BJ (cell line): ENCODE measurements at regions of chr14 and their contacts with region 1.

Region 1: DNA sequence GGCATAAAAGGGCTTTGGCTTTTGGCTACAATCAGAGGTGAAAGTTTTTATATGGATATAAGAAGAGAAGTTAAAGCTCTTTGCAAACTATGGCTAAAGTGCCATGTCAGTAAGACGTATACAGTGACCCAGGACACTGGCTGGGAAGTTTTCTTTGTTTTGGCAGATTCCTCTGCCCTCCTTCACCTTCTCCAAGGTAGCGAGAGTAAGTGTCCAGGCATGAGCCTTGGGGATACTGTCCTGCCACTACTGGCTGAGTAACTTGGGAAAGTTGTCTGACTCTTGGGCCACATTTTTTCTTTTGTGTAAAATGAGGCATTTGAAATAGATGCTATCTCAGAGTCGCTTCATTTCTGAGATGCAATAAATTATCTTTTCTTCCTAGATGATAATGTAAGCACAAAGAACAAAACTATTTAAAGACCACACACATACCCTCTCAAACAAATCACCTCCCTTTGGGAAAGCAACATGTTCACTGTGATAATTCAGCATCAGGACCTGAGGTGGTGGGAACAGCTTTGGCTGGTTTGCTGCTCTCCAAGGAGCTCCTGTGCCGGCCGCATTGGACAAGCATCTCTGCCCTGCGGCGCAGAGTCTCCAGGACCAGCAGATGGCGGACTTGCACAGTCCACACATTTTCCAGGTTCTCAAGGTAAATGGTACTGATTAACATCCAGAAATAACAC is 106.3 kb downstream of the PTCSC3 start:
- DNase-seq: no peak
- H3K4me3 ChIP-seq: no peak overlapping the region
- H3K27me3 ChIP-seq: no peaks in the 10 kb centered on the region
- CTCF ChIP-seq: peak; percentile 89

Region 2: DNA sequence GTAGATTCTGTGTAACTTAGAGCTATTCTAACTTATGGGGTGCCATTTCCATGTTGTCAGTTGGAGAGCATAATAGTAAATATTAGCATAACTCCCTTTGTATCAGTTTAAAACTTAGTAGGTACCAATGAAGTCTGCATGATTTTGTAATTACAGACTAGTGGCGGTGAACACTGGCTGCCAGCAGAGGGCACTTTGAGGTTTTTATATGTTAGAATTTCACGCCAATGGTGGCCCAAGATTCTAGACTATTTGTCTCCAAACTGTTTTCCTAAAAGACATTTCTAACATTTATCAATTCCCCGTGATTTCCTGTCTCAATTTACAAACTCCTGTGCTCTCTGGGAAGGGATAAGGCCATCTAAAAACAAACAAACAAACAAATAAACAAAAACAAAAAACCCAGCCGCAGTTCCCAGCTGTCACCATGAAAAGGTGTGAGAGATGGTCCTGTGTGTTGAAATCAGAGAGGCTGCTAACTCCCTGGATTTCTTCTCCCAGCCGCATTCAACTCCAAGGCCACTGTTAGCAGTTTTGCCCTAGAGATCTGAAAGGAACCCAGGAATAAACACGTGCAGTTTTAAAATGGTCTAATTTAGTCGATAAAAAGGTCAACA is 186.4 kb before region 1 on chr14:
- CTCF ChIA-PET with region 1: interaction called, 16 read pairs
- POLR2A ChIA-PET with region 1: no interaction called
- DNase-seq: no peak
- H3K4me3 ChIP-seq: no peak overlapping the region
- H3K27me3 ChIP-seq: no peaks in the 10 kb centered on the region
- CTCF ChIP-seq: peak; percentile 71

Region 3: GRCh38 chr14:36059531-36059930 is 10.6 kb before region 1 on chr14:
- CTCF ChIA-PET with region 1: interaction called, 17 read pairs
- POLR2A ChIA-PET with region 1: no interaction called
- DNase-seq: no peak
- H3K4me3 ChIP-seq: no peak overlapping the region
- H3K27me3 ChIP-seq: no peaks in the 10 kb centered on the region; the same call in 1 of the 2 replicates
- CTCF ChIP-seq: no peak

Region 4: DNA sequence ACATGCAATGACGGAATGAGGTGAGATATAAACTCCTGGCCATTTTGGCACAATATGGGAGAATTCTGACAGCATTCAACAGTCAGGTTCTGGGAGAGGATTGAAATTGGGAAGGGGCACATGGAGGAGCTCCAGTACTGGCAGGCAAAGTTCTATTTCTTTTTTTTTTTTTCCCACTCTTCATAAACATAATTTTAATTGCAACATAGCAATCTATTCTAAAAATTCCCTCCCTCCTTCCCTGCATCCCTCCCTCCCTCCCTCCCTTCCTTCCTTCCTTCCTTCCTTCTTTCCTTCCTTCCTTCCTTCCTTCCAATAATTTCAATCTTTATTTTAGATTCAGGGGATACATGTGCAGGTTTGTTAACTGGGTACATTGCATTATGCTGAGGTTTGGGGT is 13.1 kb after region 1 on chr14:
- CTCF ChIA-PET with region 1: interaction called, 30 read pairs
- POLR2A ChIA-PET with region 1: no interaction called
- DNase-seq: no peak
- H3K4me3 ChIP-seq: no peak overlapping the region
- H3K27me3 ChIP-seq: no peaks in the 10 kb centered on the region
- CTCF ChIP-seq: no peak

Region 5: DNA sequence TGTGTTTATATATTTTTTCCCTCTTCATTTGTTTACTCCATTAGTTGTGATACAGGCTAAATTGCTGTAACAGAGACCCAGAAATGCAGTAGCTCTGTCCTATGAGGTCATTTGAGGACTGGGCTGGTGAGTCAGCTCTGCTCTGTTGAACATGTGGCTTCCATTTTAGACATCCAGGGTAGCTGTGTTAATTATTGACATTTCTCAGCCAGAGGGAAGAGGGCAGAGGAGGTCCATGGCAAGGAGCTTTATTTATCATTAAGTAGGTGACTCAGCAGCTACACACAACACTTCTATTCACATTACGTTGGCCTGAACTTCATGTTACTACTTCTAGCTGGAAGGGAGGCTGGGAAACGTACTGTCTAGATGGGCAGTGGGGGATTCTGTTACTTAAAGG is 20.9 kb after region 1 on chr14:
- CTCF ChIA-PET with region 1: interaction called, 30 read pairs
- POLR2A ChIA-PET with region 1: no interaction called
- DNase-seq: peak; percentile 89
- H3K4me3 ChIP-seq: no peak overlapping the region
- H3K27me3 ChIP-seq: no peaks in the 10 kb centered on the region
- CTCF ChIP-seq: no peak

Region 6: GRCh38 chr14:36365766-36366165 is 295.6 kb after region 1 on chr14:
- CTCF ChIA-PET with region 1: interaction called, 18 read pairs
- POLR2A ChIA-PET with region 1: no interaction called
- DNase-seq: no peak
- H3K4me3 ChIP-seq: no peak overlapping the region
- H3K27me3 ChIP-seq: no peaks in the 10 kb centered on the region; the same call in 1 of the 2 replicates
- CTCF ChIP-seq: no peak

Region 7: DNA sequence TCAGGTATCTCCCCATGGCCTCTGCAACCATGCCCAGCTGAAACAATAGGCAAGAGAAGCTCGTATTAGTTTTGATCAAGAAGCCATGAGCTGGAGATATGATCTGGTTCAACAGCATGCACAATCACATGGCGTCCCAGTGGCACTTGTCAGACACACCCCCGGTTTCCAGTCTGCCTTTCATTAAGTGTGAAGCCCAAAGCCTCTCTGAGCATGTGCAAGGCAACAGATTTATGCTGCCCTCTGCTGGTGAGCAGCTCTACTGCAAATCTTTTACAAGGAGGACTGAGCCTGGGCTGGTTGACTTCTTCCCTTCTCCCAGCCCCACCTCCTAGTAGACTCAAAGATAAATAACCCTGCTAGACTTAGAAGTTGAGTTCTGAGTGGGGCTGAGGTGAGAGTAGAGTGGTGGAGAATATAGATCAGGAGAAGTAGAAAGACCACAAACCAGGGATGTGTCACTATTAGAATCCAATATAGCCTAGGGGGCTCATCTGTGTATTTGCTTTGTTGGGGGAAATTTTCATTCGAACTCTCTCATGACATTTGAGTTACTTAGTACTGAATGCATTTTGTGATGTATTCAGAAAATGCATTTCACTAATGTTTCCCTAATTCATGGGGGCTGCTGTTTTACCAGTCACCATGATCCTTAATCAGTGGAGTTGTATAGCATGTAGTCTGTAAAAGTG is 304.0 kb after region 1 on chr14:
- CTCF ChIA-PET with region 1: interaction called, 92 read pairs
- POLR2A ChIA-PET with region 1: no interaction called
- DNase-seq: peak; percentile 9
- H3K4me3 ChIP-seq: no peak overlapping the region
- H3K27me3 ChIP-seq: no peaks in the 10 kb centered on the region
- CTCF ChIP-seq: peak; percentile 91